Activated T-helper 2 cell treated with anti-CD3 and anti-CD28 coated beads, Interferon-gamma antibody, Interleukin-2, Interleukin-4, amounts not matched to agents 10 μg/mL and 5 μg/mL and 100 μg/mL, durations not matched to agents 14 hours and 24 hours and 36 hours (primary cell): ENCODE measurements at regions of chr14 and their contacts with region 1.

Region 1: DNA sequence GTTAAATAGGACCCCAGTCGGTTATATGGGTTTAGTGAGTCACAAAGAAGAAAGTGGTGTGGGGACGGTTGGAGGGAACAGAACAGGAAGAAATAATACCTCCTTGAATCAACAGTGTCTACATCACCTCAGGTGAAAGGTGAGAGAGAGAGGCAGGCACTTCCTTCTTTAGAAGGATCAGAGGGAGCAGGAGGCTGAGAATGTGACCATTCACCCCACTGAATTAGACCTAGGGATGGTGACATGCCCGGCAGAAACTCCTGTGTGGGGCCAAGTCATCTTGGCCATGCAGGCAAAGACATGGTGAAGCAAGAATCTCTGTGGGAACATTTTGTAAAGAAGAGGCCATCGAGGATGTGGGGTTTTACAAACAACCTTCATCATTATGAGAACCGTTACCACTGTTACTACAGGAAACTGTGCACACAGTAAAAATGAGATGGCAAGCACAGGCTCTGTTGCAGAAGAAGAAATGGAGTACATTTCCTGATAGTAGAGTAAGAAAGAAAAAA is 1196.9 kb downstream of the VRK1 start:
- DNase-seq: peak; percentile 25
- H3K4me3 Mint-ChIP-seq: no peak overlapping the region
- H3K27ac Mint-ChIP-seq: peak overlapping the region; percentile 85
- H3K4me1 Mint-ChIP-seq: peaks cover 36% of the 10 kb centered on the region
- H3K27me3 Mint-ChIP-seq: no peaks in the 10 kb centered on the region

Region 2: DNA sequence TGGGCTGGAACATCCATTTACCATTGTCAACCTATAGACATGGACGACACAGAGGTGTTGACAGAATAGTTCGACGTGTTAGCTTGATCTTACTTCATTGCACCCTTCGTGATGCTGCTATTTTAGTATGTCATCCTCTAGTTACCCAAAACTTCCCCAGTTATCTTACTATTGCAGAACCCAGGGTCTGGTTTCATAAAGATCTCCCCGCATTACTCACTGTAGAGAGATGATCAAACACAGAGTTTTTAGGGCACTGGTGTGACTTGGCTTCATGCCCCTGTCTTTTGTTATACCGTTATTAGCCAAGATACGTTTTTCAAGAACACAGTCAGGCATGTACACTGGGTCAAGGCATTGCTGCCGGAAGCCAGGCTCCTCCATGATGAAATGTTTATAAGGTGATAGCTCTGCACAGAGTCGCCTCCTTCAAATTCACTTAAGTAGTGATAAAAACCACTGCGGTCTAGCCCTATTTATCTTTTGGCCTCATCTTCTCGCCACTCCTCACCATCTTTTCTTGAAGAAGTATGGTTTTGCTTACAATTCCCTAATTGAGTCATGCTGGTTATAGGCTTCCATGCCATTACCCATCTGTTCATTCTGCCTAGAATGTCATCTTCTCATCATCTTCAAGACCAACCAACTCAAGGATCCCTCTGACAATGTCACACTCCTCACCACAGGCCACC is 69.0 kb before region 1 on chr14:
- intact Hi-C with region 1: loop called (anchors 1 kb)
- DNase-seq: peak; percentile 18
- H3K4me3 Mint-ChIP-seq: no peak overlapping the region
- H3K27ac Mint-ChIP-seq: peak overlapping the region; percentile 10
- H3K4me1 Mint-ChIP-seq: peaks cover 19% of the 10 kb centered on the region
- H3K27me3 Mint-ChIP-seq: peaks cover 11% of the 10 kb centered on the region

Region 3: GRCh38 chr14:98008381-98009113 is 14.5 kb after region 1 on chr14:
- intact Hi-C with region 1: loop called (anchors 2 kb)
- DNase-seq: no peak
- H3K4me3 Mint-ChIP-seq: no peak overlapping the region
- H3K27ac Mint-ChIP-seq: peak overlapping the region; percentile 29
- H3K4me1 Mint-ChIP-seq: peaks cover 25% of the 10 kb centered on the region
- H3K27me3 Mint-ChIP-seq: no peaks in the 10 kb centered on the region

Region 4: DNA sequence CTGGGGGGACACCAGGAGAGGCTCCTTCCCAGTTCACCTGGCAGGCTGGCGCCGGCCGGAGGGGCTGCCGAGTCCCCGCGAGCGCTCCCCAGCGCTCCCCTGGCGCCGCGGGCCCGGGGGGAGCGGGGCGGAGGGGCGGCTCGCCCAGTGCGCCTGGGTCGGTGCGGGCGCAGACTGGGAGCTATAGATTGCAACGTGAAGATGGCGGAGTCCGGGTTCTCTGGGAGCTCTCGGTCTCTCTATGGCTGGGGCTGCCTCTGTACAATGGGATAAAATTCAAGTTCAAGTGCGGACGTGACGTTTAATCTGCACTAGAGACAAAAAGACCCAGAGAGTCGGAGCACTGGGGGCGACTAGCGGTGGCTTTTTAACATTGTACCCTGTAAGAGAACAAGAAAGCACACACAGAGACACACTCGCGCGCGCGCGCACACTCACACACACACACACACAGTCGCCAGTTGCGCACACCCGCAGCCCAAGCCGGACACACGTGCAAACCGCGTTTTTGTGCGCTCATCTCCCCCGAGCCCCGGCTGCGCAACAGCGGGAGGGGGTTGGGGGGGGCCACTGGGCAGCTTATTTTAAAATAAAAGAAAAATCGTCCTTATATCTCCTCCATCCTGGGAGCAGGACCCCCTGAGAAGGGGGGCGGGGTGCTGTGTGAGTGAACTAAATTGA is 1278.0 kb after region 1 on chr14 and contains the start of gene BCL11B:
- intact Hi-C with region 1: loop called (anchors 5 kb)
- DNase-seq: peak; percentile 88
- H3K4me3 Mint-ChIP-seq: peak within 1 kb of the TSS; percentile 93
- H3K27ac Mint-ChIP-seq: peak within 1 kb of the TSS; percentile 94
- H3K4me1 Mint-ChIP-seq: peaks cover 37% of the 10 kb centered on the region
- H3K27me3 Mint-ChIP-seq: peaks cover 10% of the 10 kb centered on the region
- total RNA-seq, gene BCL11B: 34.1 and 34.9 TPM in 2 replicates